ENCODE measurements at regions of chr18 and their contacts with region 1.

Region 1: GRCh38 chr18:23812546-23813440 is 123.5 kb downstream of the LAMA3 start:
- DNase-seq: no peak
- H3K4me3 ChIP-seq: no peak overlapping the region
- H3K27ac ChIP-seq: no peak overlapping the region
- H3K4me1 ChIP-seq: no peaks in the 10 kb centered on the region
- H3K27me3 ChIP-seq: no peaks in the 10 kb centered on the region
- CTCF ChIP-seq: peak; percentile 17 to 68 (median 66)
- POLR2A ChIP-seq: no peak

Region 2: DNA sequence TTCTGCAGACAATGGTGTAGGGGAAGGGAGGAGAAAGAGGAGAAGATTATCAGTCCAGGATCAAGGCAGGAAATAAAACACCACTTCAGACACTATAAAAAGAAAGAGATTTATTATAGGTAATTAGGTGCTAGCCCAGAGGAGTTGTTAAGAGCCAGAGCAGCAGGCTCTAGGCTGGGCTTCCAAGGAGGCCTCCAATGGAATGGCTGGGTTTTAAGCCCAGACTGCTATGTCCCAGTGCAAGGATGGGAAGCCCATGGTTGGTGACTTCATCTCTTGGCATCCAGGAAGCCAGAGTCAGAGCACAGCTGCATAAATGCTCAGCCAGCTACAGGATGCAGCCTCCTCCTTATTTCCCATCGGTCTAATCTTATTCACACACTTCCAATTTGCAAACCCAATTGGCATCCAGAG is 28.0 kb before region 1 on chr18:
- intact Hi-C with region 1: loop called (anchors 1 kb)
- DNase-seq: no peak
- H3K4me3 ChIP-seq: no peak overlapping the region
- H3K27ac ChIP-seq: no peak overlapping the region
- H3K4me1 ChIP-seq: no peaks in the 10 kb centered on the region
- H3K27me3 ChIP-seq: no peaks in the 10 kb centered on the region
- CTCF ChIP-seq: no peak
- POLR2A ChIP-seq: no peak

Measured in breast epithelium (tissue), 4 donors.